HEK293T (cell line): ENCODE measurements at regions of chr1 and their contacts with region 1.

Region 1: GRCh38 chr1:40373338-40374283 is at the start of gene SMAP2:
- DNase-seq: peak; percentile 99

Region 2: DNA sequence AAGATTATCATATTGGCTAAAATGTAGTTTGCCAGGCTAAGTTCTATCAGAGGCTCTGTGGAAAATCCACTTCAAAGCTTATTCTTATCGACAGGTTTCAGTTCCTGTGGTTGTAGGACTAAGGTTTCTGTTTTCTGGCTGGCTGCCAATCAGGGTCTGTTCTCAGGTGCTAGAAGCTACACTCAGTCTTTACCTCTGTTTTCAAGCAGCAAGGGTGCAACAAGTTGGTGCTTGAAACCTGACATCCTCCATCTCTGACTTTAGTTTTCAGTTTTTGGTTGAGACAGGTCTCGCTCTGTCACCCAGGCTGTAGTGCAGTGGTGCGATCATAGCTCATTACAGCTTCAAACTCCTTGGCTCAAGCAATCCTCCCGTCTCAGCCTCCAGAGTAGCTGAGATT is 141.2 kb before region 1 on chr1:
- CTCF ChIA-PET with region 1: no interaction called
- POLR2A ChIA-PET with region 1: no interaction called
- DNase-seq: no peak

Region 3: DNA sequence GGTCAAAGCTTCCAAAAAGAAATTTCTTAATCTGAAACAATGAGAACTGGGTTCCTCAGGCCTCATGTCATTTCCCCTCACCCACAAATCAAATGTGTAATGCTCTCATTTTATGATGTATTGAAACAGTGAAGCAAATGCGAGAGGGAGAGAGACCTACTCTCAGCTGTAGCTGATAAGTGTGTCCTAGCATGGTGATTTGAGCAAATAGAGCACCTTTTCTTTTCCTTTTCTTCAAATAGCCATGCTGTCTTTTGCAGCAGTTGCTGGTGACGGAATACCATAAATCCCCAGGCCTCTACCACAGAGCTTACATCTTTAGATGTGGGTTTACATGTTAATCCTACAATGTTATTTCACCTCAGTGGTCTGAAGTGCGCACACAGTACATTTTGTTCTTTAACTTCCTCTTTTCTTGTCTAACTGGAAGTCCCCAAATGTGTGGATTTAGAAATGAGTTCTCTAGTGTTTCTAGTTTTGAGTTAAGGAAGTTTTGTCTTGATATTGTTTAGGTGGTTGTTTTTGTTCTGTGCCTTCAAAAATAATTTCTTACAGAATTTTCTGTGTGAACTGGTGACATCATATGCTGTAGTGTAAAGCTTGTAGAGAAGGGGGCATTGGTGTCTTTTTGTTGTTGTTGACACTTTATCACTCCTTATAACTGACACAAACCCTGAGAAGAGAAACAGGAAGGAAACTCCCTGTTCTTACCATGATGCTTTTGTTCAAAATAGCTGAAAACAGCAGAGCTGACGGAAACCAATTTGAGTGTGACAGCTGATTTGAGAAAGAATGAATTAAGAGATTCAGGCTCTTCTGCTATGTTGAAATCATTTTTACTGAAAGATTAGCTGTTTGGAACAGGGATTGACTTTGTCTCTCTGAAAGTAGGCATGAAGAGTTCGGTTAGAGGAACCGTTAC is 12.1 kb after region 1 on chr1:
- CTCF ChIA-PET with region 1: no interaction called
- POLR2A ChIA-PET with region 1: interaction called, 11 read pairs
- DNase-seq: no peak

Region 4: GRCh38 chr1:40411294-40411693 is 37.7 kb after region 1 on chr1:
- CTCF ChIA-PET with region 1: no interaction called
- POLR2A ChIA-PET with region 1: no interaction called
- DNase-seq: no peak

Region 5: DNA sequence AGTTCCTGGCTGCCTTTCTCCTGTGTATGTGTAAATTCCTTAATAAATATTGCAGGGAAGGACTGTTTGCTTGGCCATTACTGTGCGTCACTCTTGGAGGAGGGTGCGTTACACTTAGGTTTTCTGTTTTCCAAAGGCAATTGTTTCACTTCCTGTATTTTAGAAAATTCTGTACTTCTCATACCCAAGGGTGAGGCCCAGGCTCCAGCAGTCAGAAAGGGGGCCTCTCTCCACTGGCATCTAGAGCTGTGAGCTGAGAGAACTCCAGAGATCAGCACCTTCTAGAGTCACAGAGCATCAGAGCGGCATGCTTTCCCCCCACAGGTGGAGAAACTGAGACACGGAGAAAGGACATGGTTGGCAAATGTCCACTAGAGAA is 49.6 kb after region 1 on chr1:
- CTCF ChIA-PET with region 1: no interaction called
- POLR2A ChIA-PET with region 1: no interaction called
- DNase-seq: no peak

Region 6: GRCh38 chr1:40462956-40463590 is 89.5 kb after region 1 on chr1:
- CTCF ChIA-PET with region 1: no interaction called
- POLR2A ChIA-PET with region 1: no interaction called
- DNase-seq: no peak